Panc1 (cell line): ENCODE measurements at regions of chr14 and their contacts with region 1.

Region 1: DNA sequence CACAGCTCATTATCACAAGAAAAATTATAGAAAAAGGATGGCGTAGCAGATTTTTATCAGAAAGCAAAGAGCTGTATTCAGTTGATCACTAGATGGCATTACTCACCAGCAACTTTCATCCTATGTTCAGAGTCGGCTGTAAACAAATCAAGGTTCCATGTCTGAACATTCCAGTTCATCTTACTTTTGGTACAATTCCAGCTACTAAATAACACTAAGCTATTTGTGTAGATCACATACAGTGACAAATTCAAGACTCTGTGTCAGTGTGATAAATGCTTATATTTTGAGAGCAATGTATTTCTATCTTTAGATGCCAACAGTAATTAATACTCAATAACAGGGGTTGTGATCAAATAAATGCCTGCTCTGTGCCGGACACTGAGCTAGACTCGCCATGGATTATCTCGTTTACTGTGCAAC is 30.1 kb downstream of the NRDE2 start:
- DNase-seq: peak; percentile 7
- ATAC-seq: peak; percentile 83
- H3K4me3 ChIP-seq: no peak overlapping the region
- H3K27ac ChIP-seq: no peak overlapping the region
- H3K4me1 ChIP-seq: no peaks in the 10 kb centered on the region
- H3K27me3 ChIP-seq: no peaks in the 10 kb centered on the region
- CTCF ChIP-seq: peak; percentile 60; the same call in 1 of the 2 replicates

Region 2: GRCh38 chr14:90580377-90581335 is 279.0 kb after region 1 on chr14:
- CTCF ChIA-PET with region 1: no interaction called
- POLR2A ChIA-PET with region 1: no interaction called
- in situ Hi-C with region 1: no loop called
- intact Hi-C with region 1: no loop called
- DNase-seq: no peak
- ATAC-seq: no peak
- H3K4me3 ChIP-seq: no peak overlapping the region
- H3K27ac ChIP-seq: no peak overlapping the region
- H3K4me1 ChIP-seq: no peaks in the 10 kb centered on the region
- H3K27me3 ChIP-seq: no peaks in the 10 kb centered on the region
- CTCF ChIP-seq: no peak

Region 3: DNA sequence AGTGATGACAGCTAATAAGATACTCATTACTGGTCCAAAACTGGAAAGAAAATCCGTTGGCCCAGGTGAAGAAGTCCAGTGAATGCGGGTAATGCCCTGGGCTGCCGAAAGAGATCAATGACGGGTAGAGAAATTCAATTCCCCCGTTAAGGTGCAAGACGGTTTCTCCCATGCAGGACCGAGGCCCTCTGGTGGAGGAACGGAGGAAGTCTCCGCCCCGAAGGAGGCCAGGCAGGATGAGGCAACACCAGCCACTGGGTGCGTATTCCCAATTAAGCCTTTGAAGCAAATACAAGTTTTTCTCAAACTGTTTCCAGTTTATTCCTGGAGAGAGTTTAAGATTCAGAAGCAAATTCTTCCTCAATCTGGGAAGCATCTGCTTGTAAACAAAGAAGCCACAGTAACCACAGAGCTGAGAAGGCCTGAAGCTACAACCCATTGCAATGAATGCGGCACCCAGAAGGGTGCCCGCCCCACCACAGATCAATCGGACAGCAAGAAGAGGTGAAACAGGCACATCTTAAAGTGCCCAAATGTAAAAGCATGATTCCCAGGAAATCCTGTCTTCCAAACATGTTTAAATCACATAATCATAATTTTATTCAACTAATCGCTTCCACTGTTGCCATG is 396.0 kb after region 1 on chr14:
- CTCF ChIA-PET with region 1: interaction called, 7 read pairs
- POLR2A ChIA-PET with region 1: no interaction called
- in situ Hi-C with region 1: no loop called
- intact Hi-C with region 1: loop called (anchors 10 kb)
- DNase-seq: peak; percentile 36
- ATAC-seq: peak; percentile 93
- H3K4me3 ChIP-seq: no peak overlapping the region
- H3K27ac ChIP-seq: no peak overlapping the region; the same call in 1 of the 2 replicates
- H3K4me1 ChIP-seq: peaks cover 4% of the 10 kb centered on the region
- H3K27me3 ChIP-seq: no peaks in the 10 kb centered on the region
- CTCF ChIP-seq: peak; percentile 88

Region 4: GRCh38 chr14:90758028-90758889 is 456.6 kb after region 1 on chr14:
- CTCF ChIA-PET with region 1: interaction called, 4 read pairs
- POLR2A ChIA-PET with region 1: no interaction called
- in situ Hi-C with region 1: no loop called
- intact Hi-C with region 1: loop called (anchors 5 kb)
- DNase-seq: peak; percentile 71
- ATAC-seq: peak; percentile 96
- H3K4me3 ChIP-seq: peak overlapping the region; percentile 47 to 78
- H3K27ac ChIP-seq: peak overlapping the region; percentile 87
- H3K4me1 ChIP-seq: peaks cover 7% of the 10 kb centered on the region
- H3K27me3 ChIP-seq: no peaks in the 10 kb centered on the region
- CTCF ChIP-seq: peak; percentile 85

Region 5: DNA sequence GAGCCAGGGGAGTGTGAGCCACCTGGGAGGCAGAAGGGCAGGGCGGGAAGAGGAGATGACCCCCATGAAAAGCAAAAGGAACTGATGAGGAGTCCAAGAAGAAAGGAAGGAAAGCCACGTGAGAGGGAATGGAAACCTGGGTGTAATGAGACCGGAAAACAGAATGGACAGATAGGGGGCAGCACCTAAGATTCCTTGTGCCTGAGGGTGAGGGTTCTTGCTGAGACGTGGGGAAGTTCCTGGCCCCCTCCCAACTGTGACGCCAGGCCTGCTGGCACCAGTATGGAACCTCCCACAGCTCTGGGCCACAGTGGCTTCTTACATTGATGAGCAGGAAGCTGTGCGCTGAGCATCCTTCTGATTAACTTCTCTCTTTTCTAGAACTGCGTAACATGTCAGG is 483.8 kb after region 1 on chr14:
- CTCF ChIA-PET with region 1: no interaction called
- POLR2A ChIA-PET with region 1: no interaction called
- in situ Hi-C with region 1: no loop called
- intact Hi-C with region 1: no loop called
- DNase-seq: no peak
- ATAC-seq: no peak
- H3K4me3 ChIP-seq: no peak overlapping the region
- H3K27ac ChIP-seq: no peak overlapping the region
- H3K4me1 ChIP-seq: no peaks in the 10 kb centered on the region
- H3K27me3 ChIP-seq: no peaks in the 10 kb centered on the region
- CTCF ChIP-seq: no peak